ENCODE measurements at regions of chr6 and their contacts with region 1.

Region 1: DNA sequence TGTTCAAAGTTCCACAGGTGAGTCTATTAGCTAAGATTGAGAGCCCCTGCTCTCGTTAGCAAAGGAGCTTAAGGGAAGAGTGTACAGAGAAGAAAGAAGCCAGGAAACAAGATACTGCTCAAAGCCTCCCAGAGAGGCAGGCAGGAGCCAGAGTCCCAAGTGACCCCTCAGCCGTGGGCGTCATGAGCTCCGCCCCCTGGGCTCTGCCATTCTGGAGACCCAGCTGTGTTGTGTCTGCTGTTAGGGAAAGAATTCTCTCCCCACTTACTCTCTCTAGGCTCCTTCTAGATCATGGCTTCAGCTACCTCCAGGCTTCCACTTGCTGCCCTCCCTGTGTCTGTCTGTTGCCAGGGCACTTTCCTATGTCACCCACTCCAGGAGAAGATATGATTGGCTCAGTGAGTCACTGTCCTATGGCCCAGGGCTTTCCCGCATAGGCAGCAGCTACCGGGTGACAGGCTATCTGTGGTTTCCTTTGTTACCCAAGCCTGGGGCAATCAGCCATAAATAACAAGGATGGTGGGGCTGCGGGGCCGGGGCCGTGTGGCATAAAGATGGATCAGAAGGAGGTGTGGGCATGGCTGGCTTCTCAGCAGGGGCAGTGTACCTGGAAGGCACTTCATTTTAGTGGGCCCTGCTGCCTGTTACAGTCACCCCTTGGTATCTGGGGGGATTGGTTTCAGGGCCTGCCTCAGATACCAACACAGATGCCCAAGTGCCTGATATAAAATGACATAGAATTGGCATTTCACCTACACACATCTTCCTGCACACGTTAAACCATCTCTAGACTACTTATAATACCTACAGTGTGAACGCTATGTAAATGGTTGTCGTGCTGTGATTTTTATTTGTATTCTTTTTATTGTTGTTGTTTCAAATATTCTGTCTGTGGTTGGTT is 118.9 kb downstream of the ARMC2 start:
- DNase-seq: peak; percentile 36 to 75
- ATAC-seq: peak; percentile 88 to 94 (median 91)
- H3K4me3 ChIP-seq: peak overlapping the region; percentile 37
- H3K27ac ChIP-seq: peak overlapping the region; percentile 87
- H3K4me1 ChIP-seq: peaks cover 33% of the 10 kb centered on the region
- H3K27me3 ChIP-seq: no peaks in the 10 kb centered on the region
- CTCF ChIP-seq: no peak

Region 2: DNA sequence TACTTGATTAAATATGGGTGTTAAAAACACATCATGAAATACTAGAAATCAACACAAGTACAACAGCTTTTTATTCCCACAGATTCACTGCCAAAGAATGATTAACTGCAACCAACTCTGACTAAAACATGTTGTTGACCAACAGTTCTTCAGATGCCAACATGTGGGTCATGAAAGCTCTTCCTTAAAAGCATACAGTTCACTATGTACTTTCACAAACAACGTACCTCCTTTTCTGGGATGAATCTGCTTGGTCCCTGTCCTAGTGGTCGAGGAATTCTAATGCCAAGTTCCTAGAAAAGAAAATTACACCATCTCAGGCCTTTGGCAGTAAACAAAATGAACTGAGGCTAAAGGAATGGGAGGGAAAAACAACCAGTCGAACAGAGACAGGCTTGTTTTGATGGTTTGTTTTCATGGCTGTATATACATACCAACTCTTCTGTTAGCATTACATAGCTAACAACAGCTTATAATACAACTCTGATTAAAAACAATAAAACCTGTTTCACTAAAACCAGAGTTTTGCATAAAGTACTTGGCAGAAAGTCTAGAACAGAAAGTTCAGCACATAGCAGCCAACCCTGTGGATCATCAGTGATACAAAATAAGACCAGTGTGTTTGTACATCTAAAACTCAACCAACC is 35.1 kb after region 1 on chr6:
- intact Hi-C with region 1: loop called in 1 of 2 experiments (anchors 5 kb)
- DNase-seq: no peak
- ATAC-seq: peak; percentile 76 to 96 (median 94)
- H3K4me3 ChIP-seq: peak overlapping the region; percentile 48
- H3K27ac ChIP-seq: peak overlapping the region; percentile 97
- H3K4me1 ChIP-seq: peaks cover 89% of the 10 kb centered on the region
- H3K27me3 ChIP-seq: no peaks in the 10 kb centered on the region
- CTCF ChIP-seq: no peak

Region 3: DNA sequence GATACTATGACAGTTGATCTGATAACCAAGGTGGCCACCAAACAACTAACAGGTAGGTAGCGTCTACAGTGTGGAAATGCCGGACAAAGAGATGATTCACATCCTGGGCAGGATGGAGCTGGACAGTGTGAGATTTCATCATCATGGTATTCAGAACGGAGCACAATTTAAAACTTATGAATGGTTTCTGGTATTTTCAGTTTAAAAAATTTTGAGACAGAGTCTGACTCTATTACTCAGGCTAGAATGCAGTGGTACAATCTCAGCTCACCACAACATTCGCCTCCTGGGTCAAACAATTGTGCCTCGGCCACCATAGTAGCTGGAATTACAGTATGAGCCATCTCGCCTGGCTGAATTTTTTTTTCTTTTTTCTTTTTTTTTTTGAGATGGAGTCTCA is 172.0 kb after region 1 on chr6:
- intact Hi-C with region 1: no loop called
- DNase-seq: no peak
- ATAC-seq: no peak
- H3K4me3 ChIP-seq: no peak overlapping the region
- H3K27ac ChIP-seq: no peak overlapping the region
- H3K4me1 ChIP-seq: no peaks in the 10 kb centered on the region
- H3K27me3 ChIP-seq: no peaks in the 10 kb centered on the region
- CTCF ChIP-seq: no peak